Esophagus squamous epithelium (tissue), 5 donors: ENCODE measurements at regions of chr12 and their contacts with region 1.

Region 1: DNA sequence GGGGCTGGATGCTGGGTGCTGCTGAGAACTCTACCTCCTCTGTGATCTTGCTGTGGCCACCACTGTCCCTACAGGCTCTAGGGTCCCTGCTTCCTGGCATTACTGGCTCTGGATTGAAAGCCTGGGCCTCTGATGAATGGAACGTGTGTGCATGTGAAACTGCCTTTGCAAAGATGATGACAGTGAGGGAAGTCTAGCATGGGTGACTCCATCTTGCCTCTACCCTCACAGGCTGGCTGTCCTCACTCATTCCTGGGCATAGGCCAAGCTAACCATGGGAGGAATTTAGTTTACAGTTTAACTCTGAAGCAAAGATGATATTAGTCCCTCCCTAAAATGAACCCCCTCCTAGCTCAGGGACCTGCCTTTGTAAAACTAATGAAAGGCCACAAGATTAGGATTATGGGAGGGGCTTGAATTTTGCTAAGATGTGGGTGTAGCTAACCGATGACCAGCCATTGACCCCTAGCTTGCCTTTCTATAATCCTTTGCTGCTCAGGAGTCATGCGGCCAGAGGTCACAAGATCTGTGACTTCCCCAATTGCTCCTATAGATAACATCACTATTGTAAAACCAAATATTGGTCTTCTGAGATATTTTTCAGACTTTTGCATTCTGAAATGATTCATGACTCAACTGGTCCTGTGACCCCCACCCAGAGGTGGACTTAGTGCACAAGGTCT is 2.2 kb upstream of the C1S start:
- DNase-seq: no peak
- H3K4me3 ChIP-seq: no peak overlapping the region
- H3K27ac ChIP-seq: no peak overlapping the region
- H3K4me1 ChIP-seq: peaks cover 8 to 50% (median 24%) of the 10 kb centered on the region in 3 donors
- H3K27me3 ChIP-seq: no peaks in the 10 kb centered on the region
- CTCF ChIP-seq: no peak
- POLR2A ChIP-seq: no peak

Region 2: DNA sequence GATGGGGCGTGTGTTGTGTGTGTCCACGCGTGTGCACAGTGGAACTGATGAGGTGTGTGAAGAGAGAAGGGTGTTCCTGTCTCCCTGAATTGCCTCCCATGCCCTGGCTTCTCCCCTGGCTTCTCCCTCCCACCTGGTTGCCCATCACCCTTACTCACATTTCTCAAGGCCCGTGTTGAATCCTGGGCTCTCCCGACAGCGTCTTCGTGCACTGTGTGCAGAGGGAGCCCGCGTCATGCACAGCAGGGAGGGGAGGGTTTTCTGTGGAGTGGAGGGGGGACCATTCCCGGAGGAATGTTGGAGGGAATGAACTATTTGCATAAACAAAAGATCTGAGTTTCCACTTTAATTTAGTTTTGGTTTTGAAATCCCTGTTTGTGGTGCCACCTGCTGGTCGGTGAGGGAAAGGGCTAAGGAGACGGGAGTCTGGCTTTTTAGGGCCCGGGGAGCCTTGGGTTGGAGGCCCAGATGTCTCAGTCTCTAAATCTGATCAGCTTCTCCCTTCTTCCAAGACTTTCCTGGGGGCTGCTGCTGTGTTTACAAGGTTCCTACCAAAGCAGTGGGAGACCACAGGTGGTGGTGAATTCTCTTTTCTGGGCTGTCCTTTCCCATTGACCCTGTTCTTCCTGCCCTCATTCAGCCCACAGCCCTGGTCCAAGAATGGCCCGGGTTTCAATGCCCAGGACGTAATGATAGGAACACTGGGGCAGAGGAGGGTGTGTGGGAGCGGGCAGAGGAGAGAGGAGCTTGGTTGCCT is 34.1 kb after region 1 on chr12 and contains the start of gene C1R:
- intact Hi-C with region 1: loop called (anchors 5 kb)
- DNase-seq: no peak
- H3K4me3 ChIP-seq: peak within 1 kb of the TSS; percentile 36 to 68 (median 50)
- H3K27ac ChIP-seq: peak within 1 kb of the TSS; percentile 78 to 92 (median 87)
- H3K4me1 ChIP-seq: peaks cover 18 to 56% (median 47%) of the 10 kb centered on the region in 3 donors
- H3K27me3 ChIP-seq: no peaks in the 10 kb centered on the region
- CTCF ChIP-seq: peak; percentile 82 to 94 (median 90)
- POLR2A ChIP-seq: peak in 2 of 4 donors; percentile 41 to 47
- total RNA-seq, gene C1R: 22.8 to 297 (median 140) TPM